ENCODE measurements at regions of chr2 and their contacts with region 1.

Region 1: GRCh38 chr2:198322294-198322693 is 517.9 kb downstream of the PLCL1 start:
- DNase-seq: no peak
- H3K4me3 ChIP-seq: no peak overlapping the region
- H3K27ac ChIP-seq: no peak overlapping the region
- H3K4me1 ChIP-seq: peaks cover 4% of the 10 kb centered on the region
- H3K27me3 ChIP-seq: peaks cover 2% of the 10 kb centered on the region
- CTCF ChIP-seq: no peak

Region 2: GRCh38 chr2:198587240-198587639 is 264.9 kb after region 1 on chr2:
- CTCF ChIA-PET with region 1: no interaction called
- dilution Hi-C with region 1: no loop called
- in situ Hi-C with region 1: no loop called
- intact Hi-C with region 1: no loop called
- DNase-seq: no peak
- H3K4me3 ChIP-seq: no peak overlapping the region
- H3K27ac ChIP-seq: no peak overlapping the region
- H3K4me1 ChIP-seq: no peaks in the 10 kb centered on the region
- H3K27me3 ChIP-seq: no peaks in the 10 kb centered on the region
- CTCF ChIP-seq: no peak

Region 3: DNA sequence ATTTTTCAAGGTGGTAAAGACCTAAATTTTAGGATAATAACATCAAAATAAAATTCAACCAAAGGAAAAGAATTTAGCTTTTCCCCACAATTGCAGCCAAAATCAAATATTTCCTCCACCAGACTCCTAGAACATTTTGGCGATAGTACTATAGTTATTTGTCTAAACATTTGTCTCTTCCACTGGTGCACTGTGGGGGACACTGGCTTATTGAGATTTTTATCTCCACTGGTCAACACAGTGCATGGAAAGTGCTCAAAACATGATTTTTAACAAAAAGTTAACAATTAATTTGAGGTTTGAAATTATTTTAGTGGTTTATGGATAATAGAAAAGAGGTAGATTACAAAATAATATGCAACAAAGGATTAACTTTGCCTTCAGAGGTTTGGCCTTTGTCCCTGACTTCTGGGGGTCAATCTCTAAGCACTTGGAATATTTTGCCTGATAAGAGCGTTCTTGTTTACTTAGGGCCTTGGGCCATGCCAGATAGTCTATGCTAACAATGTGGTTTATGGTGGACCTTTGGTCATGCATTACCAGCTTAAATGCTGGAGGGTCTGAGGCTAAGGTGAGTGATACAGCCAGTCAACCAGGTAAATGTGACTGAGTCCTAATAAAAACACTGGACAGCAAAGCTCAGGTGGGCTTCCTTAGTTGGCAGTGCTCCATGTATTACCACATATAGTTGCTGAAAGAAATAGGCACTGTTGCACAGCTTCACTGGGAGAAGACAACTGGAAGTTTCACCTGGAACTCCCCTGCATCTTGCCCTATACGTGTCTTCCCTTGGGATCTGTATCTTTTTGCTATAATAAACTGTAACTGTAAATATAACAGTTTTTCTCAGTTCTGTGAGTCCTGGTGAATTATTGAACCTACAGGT is 1202.6 kb after region 1 on chr2:
- CTCF ChIA-PET with region 1: interaction called, 11 read pairs
- dilution Hi-C with region 1: no loop called
- in situ Hi-C with region 1: no loop called
- intact Hi-C with region 1: no loop called
- DNase-seq: no peak
- H3K4me3 ChIP-seq: no peak overlapping the region
- H3K27ac ChIP-seq: no peak overlapping the region
- H3K4me1 ChIP-seq: no peaks in the 10 kb centered on the region
- H3K27me3 ChIP-seq: no peaks in the 10 kb centered on the region
- CTCF ChIP-seq: no peak